GM23248 (cell line): ENCODE measurements at regions of chr6 and their contacts with region 1.

Region 1: GRCh38 chr6:75208298-75209183 is 2.7 kb upstream of the COL12A1 start:
- DNase-seq: peak; percentile 91
- H3K4me3 ChIP-seq: peak overlapping the region; percentile 98
- H3K27ac ChIP-seq: peak overlapping the region; percentile 30; the same call in 1 of the 2 replicates
- H3K4me1 ChIP-seq: peaks cover 14% of the 10 kb centered on the region
- H3K27me3 ChIP-seq: no peaks in the 10 kb centered on the region

Region 2: GRCh38 chr6:73732845-73733675 is 1475.5 kb before region 1 on chr6:
- in situ Hi-C with region 1: loop called (anchors 25 kb)
- DNase-seq: peak; percentile 83
- H3K4me3 ChIP-seq: no peak overlapping the region
- H3K27ac ChIP-seq: no peak overlapping the region
- H3K4me1 ChIP-seq: no peaks in the 10 kb centered on the region
- H3K27me3 ChIP-seq: no peaks in the 10 kb centered on the region

Region 3: GRCh38 chr6:73985891-73986290 is 1222.7 kb before region 1 on chr6:
- in situ Hi-C with region 1: loop called (anchors 25 kb)
- DNase-seq: peak; percentile 84
- H3K4me3 ChIP-seq: no peak overlapping the region
- H3K27ac ChIP-seq: peak overlapping the region; percentile 53
- H3K4me1 ChIP-seq: peaks cover 42% of the 10 kb centered on the region
- H3K27me3 ChIP-seq: no peaks in the 10 kb centered on the region

Region 4: DNA sequence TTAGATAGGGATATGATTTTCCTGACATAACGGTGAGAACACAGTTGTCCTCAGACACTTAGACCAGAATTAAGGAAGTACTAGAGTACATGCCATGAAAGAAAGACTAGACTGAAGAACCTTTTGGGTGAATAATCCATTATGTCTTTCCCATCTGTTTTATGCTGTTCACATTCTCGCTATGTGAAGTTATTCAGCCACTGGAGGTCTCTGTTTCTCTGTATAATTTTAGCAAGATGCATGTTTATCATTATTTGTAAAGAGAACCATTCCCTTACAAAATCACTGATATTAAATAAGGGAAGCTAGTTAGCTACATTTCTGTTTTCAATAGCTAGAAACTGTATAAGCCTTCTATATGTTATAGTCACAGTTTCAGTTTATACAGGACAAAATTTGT is 1120.6 kb before region 1 on chr6:
- in situ Hi-C with region 1: loop called (anchors 10 kb)
- DNase-seq: peak; percentile 73
- H3K4me3 ChIP-seq: no peak overlapping the region
- H3K27ac ChIP-seq: no peak overlapping the region
- H3K4me1 ChIP-seq: no peaks in the 10 kb centered on the region
- H3K27me3 ChIP-seq: no peaks in the 10 kb centered on the region

Region 5: DNA sequence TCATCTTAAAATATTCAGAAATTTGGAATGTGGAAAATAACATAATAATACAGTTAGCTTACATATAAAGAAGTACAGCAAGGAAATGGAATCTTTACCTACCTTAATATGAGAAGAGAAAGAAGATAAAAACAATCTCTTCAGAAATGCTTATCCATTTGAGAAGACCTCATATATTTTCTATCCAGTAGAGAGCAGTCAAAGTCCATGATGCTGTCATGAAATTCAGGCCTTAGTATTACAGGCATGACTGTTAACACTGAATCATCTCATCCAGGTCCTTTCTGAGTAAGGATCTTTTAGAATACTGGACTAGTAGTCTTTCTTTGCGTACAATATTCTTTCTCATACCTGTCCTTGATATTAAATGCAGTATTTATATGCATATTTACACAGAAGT is 799.1 kb before region 1 on chr6:
- in situ Hi-C with region 1: loop called (anchors 25 kb)
- DNase-seq: peak; percentile 88
- H3K4me3 ChIP-seq: no peak overlapping the region
- H3K27ac ChIP-seq: no peak overlapping the region
- H3K4me1 ChIP-seq: peaks cover 25% of the 10 kb centered on the region
- H3K27me3 ChIP-seq: no peaks in the 10 kb centered on the region

Region 6: DNA sequence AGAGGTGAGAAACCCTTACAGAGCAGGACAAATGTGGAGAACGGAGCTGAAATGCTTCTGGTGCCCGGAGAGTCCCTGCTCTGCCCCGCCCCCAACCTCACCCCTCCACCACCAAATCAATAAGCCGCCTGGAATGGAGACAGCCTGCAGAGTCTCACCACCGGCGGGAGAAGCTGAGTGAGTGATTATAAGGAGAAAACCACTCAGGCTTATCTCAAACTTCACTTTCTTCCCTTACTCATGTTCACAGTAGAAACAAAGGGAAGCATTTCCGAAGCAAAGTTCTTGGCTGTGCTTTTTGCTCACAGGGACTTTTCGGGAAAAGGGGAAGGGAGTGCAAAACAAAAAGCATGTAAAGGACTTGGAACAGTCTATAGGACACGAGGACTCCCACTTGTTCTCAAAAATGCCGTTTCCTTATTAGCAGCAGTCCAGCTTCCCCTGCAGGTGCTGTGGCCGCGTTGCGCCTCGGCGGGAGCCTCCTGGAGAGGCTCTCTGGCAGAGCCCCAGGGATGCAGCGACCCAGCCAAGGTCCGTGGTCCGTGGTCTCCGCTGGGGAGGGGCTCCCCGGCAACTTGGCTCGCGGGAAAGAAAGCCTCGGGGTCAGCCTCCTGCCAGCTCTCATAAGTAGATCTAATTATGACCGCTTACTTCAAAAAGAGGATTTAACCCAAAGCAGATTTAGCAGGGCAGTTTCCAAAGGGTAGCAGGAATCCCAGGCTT is 140.9 kb after region 1 on chr6:
- in situ Hi-C with region 1: no loop called
- DNase-seq: peak; percentile 36
- H3K4me3 ChIP-seq: peak overlapping the region; percentile 56
- H3K27ac ChIP-seq: no peak overlapping the region
- H3K4me1 ChIP-seq: no peaks in the 10 kb centered on the region
- H3K27me3 ChIP-seq: no peaks in the 10 kb centered on the region